ENCODE measurements at regions of chr5 and their contacts with region 1.

Region 1: DNA sequence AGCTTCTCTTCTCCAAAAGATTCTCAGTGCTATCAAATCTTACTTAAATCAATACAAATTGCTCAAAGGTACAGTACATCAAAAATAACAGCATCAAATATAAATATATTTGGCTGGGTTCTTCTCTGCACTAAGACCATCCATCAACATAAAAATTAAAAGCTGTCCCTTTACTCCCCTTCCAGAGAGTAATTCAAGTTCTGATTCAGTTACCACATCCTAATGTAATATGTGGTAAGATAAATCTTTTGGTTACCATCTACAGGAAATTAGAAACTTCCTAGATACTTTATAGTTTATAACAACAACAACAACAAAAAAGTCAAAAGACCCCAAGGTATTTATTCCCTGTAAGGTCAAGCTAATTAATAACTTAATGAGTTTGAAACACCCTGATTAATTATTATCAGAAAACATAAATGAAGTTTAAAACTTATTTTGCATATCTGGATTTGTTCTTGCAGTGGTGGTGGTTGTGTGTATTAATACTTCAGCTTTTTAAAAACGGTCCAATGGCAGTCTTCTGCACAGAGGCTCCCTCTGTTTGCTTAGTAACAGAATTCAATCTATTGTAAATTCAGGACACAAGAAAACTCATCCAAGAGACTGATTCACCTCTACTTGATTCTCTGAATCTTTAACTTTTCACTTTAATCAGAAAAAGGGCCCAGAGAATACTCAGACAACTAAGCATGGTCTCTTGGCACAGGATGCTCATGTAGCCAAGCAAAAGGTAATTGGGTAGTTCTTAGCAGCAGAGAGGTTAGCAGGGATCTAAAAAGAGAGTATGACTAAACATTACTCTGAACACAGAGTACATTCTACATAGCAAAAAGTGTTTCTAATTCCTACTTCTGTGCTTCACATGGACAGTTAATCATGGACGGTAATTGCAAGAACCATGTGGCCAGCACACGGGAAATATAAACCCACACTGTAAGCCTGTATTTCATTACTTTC is 20.1 kb downstream of the DIAPH1 start:
- DNase-seq: no peak
- ATAC-seq: peak; percentile 68
- H3K4me3 ChIP-seq: no peak overlapping the region
- H3K27ac ChIP-seq: no peak overlapping the region; the same call in 1 of the 2 replicates
- H3K4me1 ChIP-seq: peaks cover 11% of the 10 kb centered on the region
- H3K27me3 ChIP-seq: no peaks in the 10 kb centered on the region
- CTCF ChIP-seq: no peak
- EP300 ChIP-seq: no peak
- POLR2A ChIP-seq: no peak
- RAD21 ChIP-seq: no peak

Region 2: DNA sequence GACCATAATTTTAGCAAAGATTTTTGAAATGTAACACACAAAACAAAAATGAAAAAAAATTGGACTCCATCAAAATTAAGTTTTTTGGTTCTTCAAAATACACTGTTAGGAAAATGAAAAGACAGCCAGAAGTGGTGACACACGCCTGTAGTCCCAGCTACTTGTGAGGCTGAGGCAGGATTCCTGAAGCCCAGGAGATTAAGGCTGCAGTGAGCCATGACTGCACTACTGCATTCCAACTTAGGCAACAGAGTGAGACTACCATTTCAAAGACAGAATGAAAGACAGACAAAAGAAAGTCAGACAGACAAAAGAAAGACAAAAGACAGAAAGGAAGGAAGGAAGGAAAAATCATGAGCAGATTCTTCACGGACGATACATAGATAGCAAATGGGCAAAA is 12.6 kb after region 1 on chr5:
- CTCF ChIA-PET with region 1: interaction called, 517 read pairs
- POLR2A ChIA-PET with region 1: interaction called, 41 read pairs
- RAD21 ChIA-PET with region 1: interaction called, 299 read pairs
- SMC1A ChIA-PET with region 1: interaction called, 199 read pairs
- in situ Hi-C with region 1: no loop called
- intact Hi-C with region 1: no loop called
- DNase-seq: no peak
- ATAC-seq: no peak
- H3K4me3 ChIP-seq: no peak overlapping the region
- H3K27ac ChIP-seq: no peak overlapping the region
- H3K4me1 ChIP-seq: peaks cover 8% of the 10 kb centered on the region
- H3K27me3 ChIP-seq: no peaks in the 10 kb centered on the region
- CTCF ChIP-seq: no peak
- EP300 ChIP-seq: no peak
- POLR2A ChIP-seq: no peak
- RAD21 ChIP-seq: no peak